CD8-positive, alpha-beta memory T cell (primary cell): ENCODE measurements at regions of chr1 and their contacts with region 1.

Region 1: DNA sequence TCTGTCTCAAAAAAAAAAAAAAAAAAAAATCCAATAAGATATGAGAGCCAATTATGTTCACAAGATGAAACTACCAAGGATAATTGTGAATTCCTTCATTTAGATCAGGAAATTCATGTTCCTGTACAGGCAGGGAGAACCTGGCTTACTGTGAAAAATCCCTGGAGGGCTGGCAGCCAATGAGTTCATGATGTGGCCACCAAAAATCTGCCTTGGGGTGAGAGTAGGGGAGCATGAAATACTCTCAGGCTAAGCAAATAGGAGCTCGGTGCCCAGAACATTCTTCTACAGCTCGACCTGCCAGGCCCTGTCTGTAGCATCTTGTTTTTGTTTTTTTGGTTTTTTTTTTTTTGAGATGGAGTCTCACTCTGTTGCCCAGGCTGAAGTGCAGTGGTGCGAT is 50.1 kb downstream of the PIK3CD start:
- DNase-seq: no peak
- H3K4me3 ChIP-seq: no peak overlapping the region
- H3K4me3 Mint-ChIP-seq: peak overlapping the region in 2 of 7 donors; percentile 15 to 44
- H3K27ac ChIP-seq: no peak overlapping the region
- H3K27ac Mint-ChIP-seq: peak overlapping the region in 4 of 8 donors; percentile 34 to 79 (median 60)
- H3K4me1 ChIP-seq: peaks cover 52% of the 10 kb centered on the region
- H3K4me1 Mint-ChIP-seq: peaks cover 62 to 85% (median 74%) of the 10 kb centered on the region in 3 donors
- H3K27me3 ChIP-seq: no peaks in the 10 kb centered on the region
- H3K27me3 Mint-ChIP-seq: peaks cover 0 to 1% of the 10 kb centered on the region in 2 donors

Region 2: DNA sequence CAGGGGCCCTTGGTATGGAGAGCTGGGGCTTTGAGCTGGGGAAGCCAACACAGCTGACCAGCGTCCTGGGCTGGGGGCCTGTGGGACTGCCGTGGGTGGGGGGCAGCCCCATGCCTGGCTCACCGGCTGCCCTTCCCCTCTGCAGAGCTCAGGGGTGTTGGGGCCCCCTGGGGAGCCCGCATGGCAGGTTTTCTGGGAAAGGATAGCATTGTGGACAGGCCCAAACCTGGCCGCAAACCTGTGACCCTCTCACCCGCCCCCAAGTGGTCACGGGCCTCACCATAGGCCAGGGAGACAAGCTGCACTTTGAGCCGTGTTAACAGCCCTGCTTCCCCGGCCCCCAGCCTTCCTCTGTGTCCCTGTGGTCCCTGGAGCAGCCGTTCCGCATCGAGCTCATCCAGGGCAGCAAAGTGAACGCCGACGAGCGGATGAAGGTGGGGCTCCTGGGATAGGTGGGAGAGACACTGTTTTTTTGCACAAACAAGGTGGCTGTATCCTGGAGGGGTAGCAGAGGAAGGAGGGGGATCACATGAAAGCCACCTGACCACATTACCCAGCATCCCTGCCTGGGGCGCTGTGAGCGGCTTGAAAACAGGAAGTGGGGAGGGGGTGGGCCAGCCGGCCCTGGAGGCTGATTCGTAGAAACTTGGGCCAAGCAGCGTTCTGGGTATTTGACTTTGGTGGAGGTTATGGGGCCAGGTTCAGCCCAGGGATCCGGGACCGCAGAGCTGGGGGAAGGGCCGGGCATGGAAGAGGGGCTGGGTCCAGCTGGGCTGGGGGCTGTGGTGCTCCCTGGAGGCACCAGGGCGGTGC is 15.7 kb after region 1 on chr1:
- CTCF ChIA-PET with region 1: interaction called, 35 read pairs
- POLR2A ChIA-PET with region 1: interaction called, 7 read pairs
- DNase-seq: peak; percentile 80 to 95 (median 91)
- H3K4me3 ChIP-seq: peak overlapping the region; percentile 89
- H3K4me3 Mint-ChIP-seq: peak overlapping the region; percentile 90 to 98 (median 95)
- H3K27ac ChIP-seq: peak overlapping the region; percentile 81
- H3K27ac Mint-ChIP-seq: peak overlapping the region; percentile 88 to 98 (median 94)
- H3K4me1 ChIP-seq: peaks cover 92% of the 10 kb centered on the region
- H3K4me1 Mint-ChIP-seq: peaks cover 37 to 79% (median 43%) of the 10 kb centered on the region in 3 donors
- H3K27me3 ChIP-seq: no peaks in the 10 kb centered on the region
- H3K27me3 Mint-ChIP-seq: peaks cover 0 to 3% of the 10 kb centered on the region in 2 donors

Region 3: DNA sequence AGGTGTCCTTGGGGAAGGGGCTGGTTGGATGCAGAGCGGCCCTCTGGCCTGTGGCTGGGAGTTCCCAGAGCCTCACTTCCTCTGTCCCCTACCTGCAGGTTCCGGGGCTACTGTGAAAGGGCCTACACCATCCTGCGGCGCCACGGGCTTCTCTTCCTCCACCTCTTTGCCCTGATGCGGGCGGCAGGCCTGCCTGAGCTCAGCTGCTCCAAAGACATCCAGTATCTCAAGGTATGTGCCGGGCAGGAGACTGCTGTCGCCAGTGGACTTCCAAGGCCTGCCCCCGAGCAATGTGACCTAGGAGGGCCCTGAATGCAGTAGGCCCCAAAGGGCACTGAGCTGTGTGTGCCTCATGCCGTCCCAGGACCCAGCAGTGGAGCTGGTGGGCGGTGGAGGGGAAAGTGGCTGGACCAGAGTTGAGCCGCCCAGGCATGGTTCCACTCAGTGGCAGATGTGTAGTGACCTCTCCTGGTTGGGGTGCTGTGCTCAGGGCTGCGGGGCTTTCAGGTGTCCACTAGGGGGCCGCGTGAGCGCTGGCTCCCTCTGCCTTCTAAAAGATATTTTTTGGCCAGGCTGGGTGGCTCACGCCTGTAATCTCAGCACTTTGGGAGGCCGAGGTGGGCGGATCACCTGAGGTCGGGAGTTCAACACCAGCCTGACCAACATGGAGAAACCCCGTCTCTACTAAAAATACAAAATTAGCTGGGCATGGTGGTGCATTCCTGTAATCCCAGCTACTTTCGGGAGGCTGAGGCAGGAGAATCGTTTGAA is 23.2 kb after region 1 on chr1:
- CTCF ChIA-PET with region 1: interaction called, 12 read pairs
- POLR2A ChIA-PET with region 1: no interaction called
- DNase-seq: peak; percentile 53 to 78 (median 62)
- H3K4me3 ChIP-seq: no peak overlapping the region
- H3K4me3 Mint-ChIP-seq: peak overlapping the region in 1 of 7 donors; percentile 31
- H3K27ac ChIP-seq: no peak overlapping the region
- H3K27ac Mint-ChIP-seq: peak overlapping the region in 7 of 8 donors; percentile 21 to 90 (median 64)
- H3K4me1 ChIP-seq: peaks cover 88% of the 10 kb centered on the region
- H3K4me1 Mint-ChIP-seq: peaks cover 32 to 68% (median 38%) of the 10 kb centered on the region in 3 donors
- H3K27me3 ChIP-seq: no peaks in the 10 kb centered on the region
- H3K27me3 Mint-ChIP-seq: peaks cover 0 to 5% of the 10 kb centered on the region in 2 donors